ENCODE measurements at regions of chr14 and their contacts with region 1.

Region 1: GRCh38 chr14:50726372-50727107 is 58.4 kb upstream of the SAV1 start:
- DNase-seq: peak; percentile 31
- ATAC-seq: peak; percentile 93
- H3K4me3 Mint-ChIP-seq: peak overlapping the region; percentile 39
- H3K27ac Mint-ChIP-seq: peak overlapping the region; percentile 95
- H3K4me1 Mint-ChIP-seq: peaks cover 32% of the 10 kb centered on the region
- H3K27me3 Mint-ChIP-seq: no peaks in the 10 kb centered on the region

Region 2: GRCh38 chr14:50667996-50668825 is 58.3 kb before region 1 on chr14 and contains the start of gene SAV1:
- CTCF ChIA-PET with region 1: no interaction called
- POLR2A ChIA-PET with region 1: interaction called, 3 read pairs
- intact Hi-C with region 1: loop called (anchors 1 to 5 kb)
- DNase-seq: peak; percentile 71
- ATAC-seq: peak; percentile 79
- H3K4me3 Mint-ChIP-seq: no peak within 1 kb of the TSS
- H3K27ac Mint-ChIP-seq: peak within 1 kb of the TSS; percentile 80
- H3K4me1 Mint-ChIP-seq: peaks cover 12% of the 10 kb centered on the region
- H3K27me3 Mint-ChIP-seq: no peaks in the 10 kb centered on the region
- total RNA-seq, gene SAV1: 13.6 TPM

Region 3: GRCh38 chr14:50714450-50715073 is 12.0 kb before region 1 on chr14:
- CTCF ChIA-PET with region 1: interaction called, 10 read pairs
- POLR2A ChIA-PET with region 1: no interaction called
- intact Hi-C with region 1: no loop called
- DNase-seq: no peak
- ATAC-seq: peak; percentile 60
- H3K4me3 Mint-ChIP-seq: no peak overlapping the region
- H3K27ac Mint-ChIP-seq: no peak overlapping the region
- H3K4me1 Mint-ChIP-seq: no peaks in the 10 kb centered on the region
- H3K27me3 Mint-ChIP-seq: peaks cover 6% of the 10 kb centered on the region

Region 4: DNA sequence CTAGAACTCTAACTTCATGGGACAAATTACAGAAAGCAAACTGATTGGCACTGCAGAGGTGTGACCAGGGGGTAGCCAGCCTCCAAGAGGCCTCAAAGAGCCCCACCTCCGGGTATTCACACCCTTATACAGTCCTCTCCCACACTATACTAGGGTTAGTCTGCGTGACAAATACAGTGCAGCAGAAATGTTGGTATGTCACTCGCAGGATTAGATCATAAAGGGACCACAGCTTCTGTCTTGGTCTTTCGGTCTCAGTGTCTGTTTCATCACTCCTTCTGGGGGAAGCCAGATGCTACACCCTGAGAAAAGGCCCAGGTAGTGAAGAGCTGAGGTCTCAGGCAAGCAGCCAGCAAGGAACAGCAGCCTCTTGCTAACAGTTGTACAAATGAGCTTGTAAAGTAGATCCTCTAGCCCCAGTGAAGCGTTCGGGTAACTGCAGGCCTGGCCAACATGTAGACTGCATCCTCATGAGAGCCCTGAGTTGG is 10.4 kb after region 1 on chr14:
- CTCF ChIA-PET with region 1: interaction called, 31 read pairs
- POLR2A ChIA-PET with region 1: interaction called, 7 read pairs
- intact Hi-C with region 1: loop called (anchors 1 kb)
- DNase-seq: peak; percentile 68
- ATAC-seq: peak; percentile 95
- H3K4me3 Mint-ChIP-seq: no peak overlapping the region
- H3K27ac Mint-ChIP-seq: peak overlapping the region; percentile 51
- H3K4me1 Mint-ChIP-seq: peaks cover 43% of the 10 kb centered on the region
- H3K27me3 Mint-ChIP-seq: no peaks in the 10 kb centered on the region

Region 5: GRCh38 chr14:50762001-50762930 is 35.7 kb after region 1 on chr14:
- CTCF ChIA-PET with region 1: interaction called, 35 read pairs
- POLR2A ChIA-PET with region 1: interaction called, 11 read pairs
- intact Hi-C with region 1: loop called (anchors 1 kb)
- DNase-seq: peak; percentile 79
- ATAC-seq: peak; percentile 99
- H3K4me3 Mint-ChIP-seq: no peak overlapping the region
- H3K27ac Mint-ChIP-seq: peak overlapping the region; percentile 58
- H3K4me1 Mint-ChIP-seq: peaks cover 31% of the 10 kb centered on the region
- H3K27me3 Mint-ChIP-seq: no peaks in the 10 kb centered on the region

Region 6: GRCh38 chr14:50785457-50786063 is 59.0 kb after region 1 on chr14:
- CTCF ChIA-PET with region 1: interaction called, 4 read pairs
- POLR2A ChIA-PET with region 1: interaction called, 3 read pairs
- intact Hi-C with region 1: loop called in 1 of 2 experiments (anchors 1 kb)
- DNase-seq: no peak
- ATAC-seq: no peak
- H3K4me3 Mint-ChIP-seq: no peak overlapping the region
- H3K27ac Mint-ChIP-seq: peak overlapping the region; percentile 6
- H3K4me1 Mint-ChIP-seq: peaks cover 66% of the 10 kb centered on the region
- H3K27me3 Mint-ChIP-seq: no peaks in the 10 kb centered on the region

Region 7: GRCh38 chr14:50823051-50823761 is 96.7 kb after region 1 on chr14:
- CTCF ChIA-PET with region 1: no interaction called
- POLR2A ChIA-PET with region 1: no interaction called
- intact Hi-C with region 1: loop called (anchors 2 to 5 kb)
- DNase-seq: peak; percentile 57
- ATAC-seq: peak; percentile 31
- H3K4me3 Mint-ChIP-seq: peak overlapping the region; percentile 64
- H3K27ac Mint-ChIP-seq: peak overlapping the region; percentile 82
- H3K4me1 Mint-ChIP-seq: peaks cover 85% of the 10 kb centered on the region
- H3K27me3 Mint-ChIP-seq: no peaks in the 10 kb centered on the region

Measured in activated CD4-positive, alpha-beta T cell treated with anti-CD3 and anti-CD28 coated beads for 36 hours (primary cell).